ENCODE measurements at regions of chr18 and their contacts with region 1.

Region 1: DNA sequence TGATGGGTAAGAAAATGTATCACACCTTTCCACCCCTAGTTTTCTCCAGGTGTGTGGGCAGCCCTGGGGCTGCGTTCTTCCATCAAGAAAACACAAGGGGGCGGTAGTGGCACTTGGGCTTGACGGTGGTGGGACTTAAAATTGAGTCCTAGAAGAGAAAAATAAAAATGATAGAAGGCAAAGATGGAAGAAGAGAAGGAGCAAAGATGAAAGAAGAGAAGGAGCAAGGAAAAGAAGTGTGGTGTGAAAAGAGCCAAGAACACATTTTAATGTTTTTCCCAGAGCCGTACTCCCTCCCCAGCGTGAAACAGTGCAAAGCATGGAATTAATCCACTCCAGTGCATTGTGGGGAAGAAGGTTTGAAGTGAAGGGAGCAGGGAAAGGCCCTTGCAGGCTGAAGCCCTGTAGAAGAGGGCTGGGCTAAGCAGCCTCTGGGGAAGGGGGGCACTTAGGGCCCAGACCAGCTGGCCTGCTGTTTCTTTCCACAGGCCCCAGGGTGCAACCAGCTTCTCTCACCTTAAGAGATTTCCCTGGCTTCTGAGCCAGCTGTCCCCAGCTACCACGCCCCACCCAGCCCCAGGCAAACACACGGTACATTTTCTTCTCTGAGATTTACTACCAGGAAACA is 256.8 kb downstream of the RNF152 start:
- DNase-seq: peak; percentile 76
- H3K4me3 ChIP-seq: no peak overlapping the region
- H3K27ac ChIP-seq: no peak overlapping the region
- H3K4me1 ChIP-seq: peaks cover 4% of the 10 kb centered on the region
- H3K27me3 ChIP-seq: no peaks in the 10 kb centered on the region
- CTCF ChIP-seq: peak; percentile 82 to 88
- POLR2A ChIP-seq: no peak

Region 2: GRCh38 chr18:61502472-61502871 is 133.5 kb before region 1 on chr18:
- CTCF ChIA-PET with region 1: no interaction called
- POLR2A ChIA-PET with region 1: no interaction called
- dilution Hi-C with region 1: no loop called
- intact Hi-C with region 1: no loop called
- DNase-seq: peak; percentile 65
- H3K4me3 ChIP-seq: no peak overlapping the region
- H3K27ac ChIP-seq: no peak overlapping the region
- H3K4me1 ChIP-seq: no peaks in the 10 kb centered on the region
- H3K27me3 ChIP-seq: peaks cover 0 to 2% of the 10 kb centered on the region in 2 experiments
- CTCF ChIP-seq: peak; percentile 58 to 64
- POLR2A ChIP-seq: no peak

Region 3: DNA sequence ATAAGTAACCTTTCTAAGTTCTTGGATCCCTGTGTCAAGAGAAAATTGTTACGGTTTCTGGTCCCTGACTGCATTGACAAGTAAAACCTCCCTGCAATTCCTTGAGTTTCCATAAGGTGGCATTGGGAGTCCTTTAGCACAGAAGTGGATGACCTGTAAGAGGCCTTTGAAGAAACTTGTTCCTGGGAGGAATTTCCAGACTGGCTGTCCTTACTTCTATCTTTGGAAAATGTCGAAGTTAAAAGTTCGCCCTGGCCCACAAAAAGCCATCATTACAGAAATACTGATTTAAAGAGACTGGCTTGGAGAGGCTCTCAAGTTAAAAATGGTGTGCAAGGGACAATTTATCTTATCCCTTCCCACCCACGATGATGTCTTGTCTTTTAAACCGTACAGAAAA is 84.4 kb before region 1 on chr18:
- CTCF ChIA-PET with region 1: interaction called, 4 read pairs
- POLR2A ChIA-PET with region 1: no interaction called
- dilution Hi-C with region 1: no loop called
- intact Hi-C with region 1: loop called (anchors 1 kb)
- DNase-seq: peak; percentile 88
- H3K4me3 ChIP-seq: no peak overlapping the region
- H3K27ac ChIP-seq: no peak overlapping the region
- H3K4me1 ChIP-seq: no peaks in the 10 kb centered on the region
- H3K27me3 ChIP-seq: no peaks in the 10 kb centered on the region
- CTCF ChIP-seq: peak; percentile 72 to 79
- POLR2A ChIP-seq: no peak

Region 4: DNA sequence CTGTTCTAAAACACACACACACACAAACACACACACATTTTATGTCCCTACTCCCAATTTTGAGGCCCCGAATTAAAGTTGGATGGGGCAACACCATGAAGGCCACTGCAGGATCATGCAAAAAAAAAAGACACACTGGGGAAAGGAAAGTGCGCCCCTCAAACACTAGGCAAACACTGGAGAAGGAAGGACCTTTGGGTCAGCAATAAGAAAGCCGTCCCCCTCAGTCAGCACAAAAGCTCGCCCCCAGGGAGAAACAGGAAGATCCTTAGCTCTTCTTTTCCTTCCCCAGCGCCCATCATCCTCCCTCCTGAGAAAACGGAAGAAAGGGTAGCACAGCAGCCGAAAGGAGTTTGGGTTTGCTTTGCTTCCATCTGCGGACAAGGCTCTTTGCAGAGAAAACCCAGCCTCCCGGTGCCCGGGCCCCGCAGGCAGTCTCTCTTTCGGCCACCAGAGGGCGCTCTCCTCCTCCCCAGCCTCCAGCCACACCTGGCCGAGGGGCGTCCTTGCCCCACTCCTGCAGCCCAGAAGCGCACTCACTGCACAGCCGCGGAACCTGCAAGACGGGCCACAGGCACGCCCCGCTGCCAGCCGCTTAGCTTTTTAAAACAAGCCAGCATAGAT is 54.3 kb before region 1 on chr18:
- CTCF ChIA-PET with region 1: interaction called, 34 read pairs
- POLR2A ChIA-PET with region 1: no interaction called
- dilution Hi-C with region 1: no loop called
- intact Hi-C with region 1: loop called (anchors 1 kb)
- DNase-seq: peak; percentile 77
- H3K4me3 ChIP-seq: peak overlapping the region; percentile 40 to 56 (median 54)
- H3K27ac ChIP-seq: peak overlapping the region; percentile 25
- H3K4me1 ChIP-seq: peaks cover 18% of the 10 kb centered on the region
- H3K27me3 ChIP-seq: no peaks in the 10 kb centered on the region
- CTCF ChIP-seq: peak; percentile 97
- POLR2A ChIP-seq: no peak

Region 5: DNA sequence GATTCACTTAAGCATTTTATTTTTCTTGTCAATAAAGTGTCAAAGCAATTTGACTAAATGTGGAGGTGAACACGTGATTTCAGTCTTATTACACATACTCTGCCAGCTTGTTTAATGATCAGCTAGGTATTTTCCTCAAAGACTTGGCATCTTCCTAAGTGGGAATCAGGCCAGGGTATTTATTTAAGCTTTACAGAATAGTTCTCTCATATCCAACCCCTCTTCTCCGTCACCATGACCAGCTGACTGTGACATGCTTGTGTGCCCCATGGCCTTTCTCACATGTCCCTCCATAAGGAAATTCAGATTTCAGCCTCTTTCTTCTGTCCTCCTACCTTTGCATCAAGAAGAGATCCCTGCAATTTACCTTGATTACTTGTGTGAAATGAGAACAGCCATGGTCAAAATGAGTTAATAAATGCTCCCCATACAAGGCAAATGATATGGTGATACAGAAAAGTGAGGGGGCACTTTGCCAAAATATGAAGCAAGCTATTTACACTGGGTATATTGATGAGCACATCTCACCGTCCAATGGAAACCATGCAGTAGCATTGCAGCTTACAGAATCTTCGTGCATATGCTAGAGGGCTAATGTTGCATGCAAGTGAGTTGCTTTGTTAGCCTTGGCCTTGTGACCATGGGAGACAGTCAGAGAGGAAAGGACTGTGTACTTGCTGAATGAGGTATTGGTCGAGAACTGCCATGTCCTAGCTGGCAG is 54.6 kb after region 1 on chr18:
- CTCF ChIA-PET with region 1: interaction called, 3 read pairs
- POLR2A ChIA-PET with region 1: no interaction called
- dilution Hi-C with region 1: no loop called
- intact Hi-C with region 1: loop called (anchors 5 kb)
- DNase-seq: no peak
- H3K4me3 ChIP-seq: no peak overlapping the region
- H3K27ac ChIP-seq: no peak overlapping the region
- H3K4me1 ChIP-seq: peaks cover 16% of the 10 kb centered on the region
- H3K27me3 ChIP-seq: no peaks in the 10 kb centered on the region
- CTCF ChIP-seq: no peak
- POLR2A ChIP-seq: no peak

Region 6: GRCh38 chr18:61748004-61748403 is 112.0 kb after region 1 on chr18:
- CTCF ChIA-PET with region 1: interaction called, 4 read pairs
- POLR2A ChIA-PET with region 1: no interaction called
- dilution Hi-C with region 1: no loop called
- intact Hi-C with region 1: loop called (anchors 1 kb)
- DNase-seq: peak; percentile 88
- H3K4me3 ChIP-seq: no peak overlapping the region
- H3K27ac ChIP-seq: peak overlapping the region; percentile 88
- H3K4me1 ChIP-seq: peaks cover 23% of the 10 kb centered on the region
- H3K27me3 ChIP-seq: no peaks in the 10 kb centered on the region
- CTCF ChIP-seq: no peak
- POLR2A ChIP-seq: peak; percentile 45

Region 7: DNA sequence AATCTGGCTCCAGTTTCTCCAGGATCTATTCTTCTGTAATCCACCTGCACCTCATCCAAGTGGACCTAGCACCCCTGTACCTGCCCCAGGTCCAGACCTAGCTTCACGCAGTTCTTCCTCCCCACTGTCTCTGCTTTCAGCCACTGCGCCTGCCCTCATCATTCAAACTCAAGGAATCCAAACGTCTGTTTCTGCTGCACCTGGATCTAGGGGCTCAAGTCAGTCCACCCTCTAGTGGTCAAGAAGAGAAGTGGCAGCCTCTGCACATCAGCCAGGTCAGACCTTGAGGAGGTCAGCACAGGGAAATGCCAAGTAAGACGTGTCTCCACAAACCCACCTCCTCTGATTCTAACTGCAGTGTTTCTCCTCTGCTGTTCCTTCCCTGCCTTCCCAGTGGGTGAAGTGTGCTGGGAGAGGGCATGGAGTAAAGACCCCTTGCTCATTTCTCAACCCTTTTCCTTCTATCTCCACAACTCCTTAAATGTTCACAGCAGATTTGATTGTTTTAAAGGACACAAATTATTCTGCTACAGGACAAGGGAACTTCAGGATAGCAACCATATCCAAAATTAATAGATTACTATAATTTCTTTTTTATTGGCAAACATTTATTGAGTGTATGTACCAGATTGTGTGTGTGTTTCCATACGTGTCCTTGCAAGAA is 265.4 kb after region 1 on chr18:
- CTCF ChIA-PET with region 1: interaction called, 10 read pairs
- POLR2A ChIA-PET with region 1: no interaction called
- dilution Hi-C with region 1: no loop called
- intact Hi-C with region 1: loop called (anchors 1 kb)
- DNase-seq: peak; percentile 74
- H3K4me3 ChIP-seq: no peak overlapping the region
- H3K27ac ChIP-seq: no peak overlapping the region
- H3K4me1 ChIP-seq: peaks cover 4% of the 10 kb centered on the region
- H3K27me3 ChIP-seq: no peaks in the 10 kb centered on the region
- CTCF ChIP-seq: peak; percentile 91 to 95
- POLR2A ChIP-seq: no peak

Region 8: GRCh38 chr18:61992285-61992684 is 356.3 kb after region 1 on chr18:
- CTCF ChIA-PET with region 1: no interaction called
- POLR2A ChIA-PET with region 1: no interaction called
- dilution Hi-C with region 1: no loop called
- intact Hi-C with region 1: loop called (anchors 10 kb)
- DNase-seq: peak; percentile 95
- H3K4me3 ChIP-seq: peak overlapping the region in 1 of 3 experiments; percentile 13
- H3K27ac ChIP-seq: peak overlapping the region; percentile 98
- H3K4me1 ChIP-seq: peaks cover 58% of the 10 kb centered on the region
- H3K27me3 ChIP-seq: no peaks in the 10 kb centered on the region
- CTCF ChIP-seq: no peak
- POLR2A ChIP-seq: peak; percentile 33

Region 9: DNA sequence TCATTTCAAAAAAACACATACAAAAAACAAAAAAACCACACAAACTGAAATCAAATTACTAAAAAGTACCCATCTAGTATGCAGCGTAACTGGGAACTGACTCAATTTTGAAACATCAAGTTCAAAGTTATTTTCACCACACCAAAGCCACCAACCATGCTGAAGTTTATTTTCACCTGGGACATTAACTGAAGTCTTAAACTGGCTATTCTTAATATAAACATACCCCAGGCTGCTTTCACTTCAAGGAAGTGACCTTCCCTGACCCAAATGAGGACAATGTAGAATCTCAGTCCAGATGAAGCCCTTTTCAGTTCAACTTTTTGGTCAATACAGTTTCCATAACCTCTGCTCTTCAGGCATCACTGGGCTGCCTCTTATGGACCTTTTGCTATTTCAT is 466.2 kb after region 1 on chr18:
- CTCF ChIA-PET with region 1: no interaction called
- POLR2A ChIA-PET with region 1: no interaction called
- dilution Hi-C with region 1: no loop called
- intact Hi-C with region 1: no loop called
- DNase-seq: no peak
- H3K4me3 ChIP-seq: no peak overlapping the region
- H3K27ac ChIP-seq: no peak overlapping the region
- H3K4me1 ChIP-seq: peaks cover 25% of the 10 kb centered on the region
- H3K27me3 ChIP-seq: no peaks in the 10 kb centered on the region
- CTCF ChIP-seq: no peak
- POLR2A ChIP-seq: no peak

Measured in endothelial cell of umbilical vein (primary cell).